Activated T-helper 1 cell treated with anti-CD3 and anti-CD28 coated beads, Interleukin-12 subunit alpha, Interleukin-12 subunit beta, Interleukin-2, Interleukin-4 antibody, amounts not matched to agents 30 ng/mL and 10 ng/mL and 1 ng/mL, durations not matched to agents 14 hours and 24 hours and 36 hours (primary cell): ENCODE measurements at regions of chr4 and their contacts with region 1.

Region 1: DNA sequence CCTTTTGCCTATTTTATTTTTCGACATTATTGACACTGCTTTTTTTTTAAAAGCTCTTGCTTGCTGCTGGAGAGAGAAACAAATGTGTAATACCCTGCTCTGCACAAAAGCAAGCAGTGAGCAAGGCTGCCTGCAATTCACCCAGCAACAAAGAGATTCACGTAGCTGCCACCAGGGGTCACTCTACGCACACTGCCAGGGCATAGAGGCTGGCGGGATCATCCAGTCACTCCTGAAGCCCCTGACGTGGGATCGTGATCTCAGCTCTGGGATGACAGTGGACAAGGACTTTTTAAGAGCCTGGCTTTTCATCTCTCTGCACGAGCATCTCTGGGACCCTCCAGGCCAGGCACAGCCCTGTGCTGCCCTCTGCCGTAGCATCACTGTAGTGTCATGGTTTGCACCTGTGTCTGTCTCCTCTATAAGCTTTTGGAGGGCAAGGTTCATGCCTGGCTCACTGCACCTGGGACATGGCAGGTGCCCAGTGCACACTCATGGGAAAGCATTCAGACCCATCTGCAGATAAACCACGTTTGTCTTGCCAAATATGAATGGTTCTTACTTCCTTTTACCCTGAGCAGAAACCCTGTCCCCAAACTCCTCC is 19.8 kb downstream of the C4orf50 start:
- DNase-seq: peak; percentile 14
- H3K4me3 Mint-ChIP-seq: no peak overlapping the region
- H3K27ac Mint-ChIP-seq: no peak overlapping the region
- H3K4me1 Mint-ChIP-seq: peaks cover 20% of the 10 kb centered on the region
- H3K27me3 Mint-ChIP-seq: peaks cover 3% of the 10 kb centered on the region

Region 2: GRCh38 chr4:5798462-5798861 is 200.0 kb before region 1 on chr4:
- intact Hi-C with region 1: no loop called
- DNase-seq: no peak
- H3K4me3 Mint-ChIP-seq: no peak overlapping the region
- H3K27ac Mint-ChIP-seq: no peak overlapping the region
- H3K4me1 Mint-ChIP-seq: no peaks in the 10 kb centered on the region
- H3K27me3 Mint-ChIP-seq: no peaks in the 10 kb centered on the region

Region 3: GRCh38 chr4:5912614-5913019 is 85.8 kb before region 1 on chr4:
- intact Hi-C with region 1: no loop called
- DNase-seq: no peak
- H3K4me3 Mint-ChIP-seq: no peak overlapping the region
- H3K27ac Mint-ChIP-seq: no peak overlapping the region
- H3K4me1 Mint-ChIP-seq: no peaks in the 10 kb centered on the region
- H3K27me3 Mint-ChIP-seq: peaks cover 2% of the 10 kb centered on the region

Region 4: DNA sequence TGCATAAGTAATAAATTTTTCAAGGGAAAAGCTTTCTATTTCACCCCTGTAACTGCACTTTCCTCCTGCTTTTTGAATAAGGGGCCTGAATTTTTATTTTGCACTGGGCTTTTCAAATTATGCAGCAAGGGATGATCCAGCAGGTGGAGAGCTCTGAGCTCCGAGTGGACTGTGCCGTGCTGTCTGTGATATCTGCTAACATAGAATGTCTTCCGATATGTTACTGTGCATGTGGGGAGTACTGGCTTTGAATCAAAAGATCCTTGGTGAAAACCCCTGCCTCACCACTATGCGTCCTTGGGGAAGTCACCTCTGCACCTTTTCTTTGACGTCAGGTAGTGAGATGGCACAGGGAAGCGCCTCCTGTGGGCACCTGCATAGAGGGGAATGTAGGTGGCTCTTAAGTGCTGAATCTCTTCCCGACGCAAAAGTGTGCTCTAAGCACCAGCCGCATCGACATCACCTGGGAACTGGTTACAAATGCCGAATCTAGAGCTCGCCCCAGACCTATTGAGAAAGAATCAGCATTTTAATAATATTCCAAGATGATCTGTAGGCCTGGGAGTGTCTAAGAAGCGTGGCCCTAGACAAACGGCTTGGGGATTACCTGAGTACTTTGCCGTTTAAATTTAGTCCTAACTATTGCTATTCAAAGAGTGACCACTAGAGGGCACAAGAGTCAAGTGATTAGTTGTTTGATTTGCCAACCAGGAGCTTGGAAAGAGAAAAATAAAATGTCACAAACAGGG is 252.0 kb after region 1 on chr4:
- intact Hi-C with region 1: loop called (anchors 1 kb)
- DNase-seq: peak; percentile 25
- H3K4me3 Mint-ChIP-seq: no peak overlapping the region
- H3K27ac Mint-ChIP-seq: no peak overlapping the region
- H3K4me1 Mint-ChIP-seq: peaks cover 8% of the 10 kb centered on the region
- H3K27me3 Mint-ChIP-seq: peaks cover 36% of the 10 kb centered on the region

Region 5: DNA sequence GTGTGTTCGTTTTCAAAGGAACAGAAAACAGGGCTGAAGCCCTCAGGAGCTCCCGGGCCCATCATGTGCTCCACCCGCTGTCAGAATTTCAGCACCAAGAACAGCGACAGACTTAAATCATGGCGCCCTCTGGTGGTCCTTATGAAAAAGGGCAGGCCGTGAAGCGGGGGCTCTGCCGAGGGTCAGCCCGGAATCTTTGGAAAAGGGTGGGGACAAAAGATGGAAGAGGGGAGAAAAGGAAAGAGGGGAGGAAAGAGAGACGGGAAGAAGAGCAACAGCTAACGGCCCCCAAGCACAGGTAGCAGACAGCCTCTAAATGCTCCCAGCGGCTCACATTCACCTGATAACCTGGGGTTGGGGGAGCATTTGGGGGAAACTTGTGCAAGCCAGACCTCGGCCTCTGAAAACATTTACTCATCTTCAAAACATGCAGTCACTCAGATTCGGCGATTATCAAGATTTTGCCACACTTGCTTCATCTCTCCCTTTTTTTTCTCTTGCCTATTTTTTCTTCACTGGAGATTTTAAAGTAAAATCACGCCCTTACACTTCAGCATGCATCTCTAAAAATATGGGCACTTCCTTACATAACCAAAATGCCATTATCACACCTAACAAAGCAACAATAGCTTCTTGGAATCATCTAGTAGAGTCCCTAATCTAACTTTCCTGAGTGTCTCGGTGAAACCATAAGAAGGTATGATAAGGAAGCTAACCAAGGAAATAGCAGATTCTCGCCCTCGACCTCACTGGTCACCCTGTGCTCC is 548.4 kb after region 1 on chr4:
- intact Hi-C with region 1: loop called (anchors 2 kb)
- DNase-seq: peak; percentile 39
- H3K4me3 Mint-ChIP-seq: no peak overlapping the region
- H3K27ac Mint-ChIP-seq: no peak overlapping the region
- H3K4me1 Mint-ChIP-seq: no peaks in the 10 kb centered on the region
- H3K27me3 Mint-ChIP-seq: peaks cover 2% of the 10 kb centered on the region